ENCODE measurements at regions of chr16 and their contacts with region 1.

Region 1: DNA sequence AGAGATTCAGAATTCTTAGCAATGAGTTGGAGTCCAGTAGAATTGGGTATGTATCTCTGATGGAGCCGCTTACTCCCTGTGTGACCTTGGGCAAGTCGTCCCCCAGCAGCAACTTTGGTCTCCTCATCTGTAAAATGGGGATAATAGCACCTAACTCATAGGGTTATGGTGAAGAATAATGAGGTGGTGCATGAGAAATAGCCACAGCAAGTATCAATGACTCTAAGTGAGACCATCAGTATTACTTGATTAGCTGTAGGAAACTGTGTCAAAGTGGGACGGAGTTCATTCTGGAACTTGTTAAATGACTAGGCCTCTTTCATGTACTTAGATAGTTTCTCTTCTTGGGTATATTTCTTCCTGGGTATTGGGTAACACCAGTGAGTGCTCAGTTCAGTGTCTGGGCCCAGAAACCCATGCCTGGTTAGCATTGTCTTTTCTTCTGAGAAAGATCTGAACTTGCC is 6.4 kb downstream of the PRKCB start:
- DNase-seq: peak; percentile 71
- H3K4me3 Mint-ChIP-seq: peak overlapping the region; percentile 14
- H3K27ac Mint-ChIP-seq: peak overlapping the region; percentile 68
- H3K4me1 Mint-ChIP-seq: peaks cover 87% of the 10 kb centered on the region
- H3K27me3 Mint-ChIP-seq: no peaks in the 10 kb centered on the region

Region 2: GRCh38 chr16:23670137-23670776 is 171.9 kb before region 1 on chr16:
- CTCF ChIA-PET with region 1: no interaction called
- POLR2A ChIA-PET with region 1: no interaction called
- intact Hi-C with region 1: loop called (anchors 2 kb)
- DNase-seq: peak; percentile 84
- H3K4me3 Mint-ChIP-seq: no peak overlapping the region
- H3K27ac Mint-ChIP-seq: peak overlapping the region; percentile 44
- H3K4me1 Mint-ChIP-seq: peaks cover 19% of the 10 kb centered on the region
- H3K27me3 Mint-ChIP-seq: no peaks in the 10 kb centered on the region

Region 3: GRCh38 chr16:23795378-23795777 is 46.8 kb before region 1 on chr16:
- CTCF ChIA-PET with region 1: no interaction called
- POLR2A ChIA-PET with region 1: no interaction called
- intact Hi-C with region 1: no loop called
- DNase-seq: no peak
- H3K4me3 Mint-ChIP-seq: no peak overlapping the region
- H3K27ac Mint-ChIP-seq: no peak overlapping the region
- H3K4me1 Mint-ChIP-seq: no peaks in the 10 kb centered on the region
- H3K27me3 Mint-ChIP-seq: no peaks in the 10 kb centered on the region

Region 4: GRCh38 chr16:23852794-23853562 is 10.8 kb after region 1 on chr16:
- CTCF ChIA-PET with region 1: interaction called, 5 read pairs
- POLR2A ChIA-PET with region 1: no interaction called
- intact Hi-C with region 1: loop called (anchors 1 kb)
- DNase-seq: no peak
- H3K4me3 Mint-ChIP-seq: no peak overlapping the region
- H3K27ac Mint-ChIP-seq: no peak overlapping the region
- H3K4me1 Mint-ChIP-seq: peaks cover 87% of the 10 kb centered on the region
- H3K27me3 Mint-ChIP-seq: no peaks in the 10 kb centered on the region

Region 5: GRCh38 chr16:23962001-23962400 is 119.8 kb after region 1 on chr16:
- CTCF ChIA-PET with region 1: no interaction called
- POLR2A ChIA-PET with region 1: no interaction called
- intact Hi-C with region 1: loop called (anchors 2 kb)
- DNase-seq: peak; percentile 84
- H3K4me3 Mint-ChIP-seq: peak overlapping the region; percentile 34
- H3K27ac Mint-ChIP-seq: peak overlapping the region; percentile 47
- H3K4me1 Mint-ChIP-seq: peaks cover 67% of the 10 kb centered on the region
- H3K27me3 Mint-ChIP-seq: no peaks in the 10 kb centered on the region

Region 6: GRCh38 chr16:24151482-24151939 is 309.3 kb after region 1 on chr16:
- CTCF ChIA-PET with region 1: no interaction called
- POLR2A ChIA-PET with region 1: no interaction called
- intact Hi-C with region 1: loop called (anchors 5 kb)
- DNase-seq: peak; percentile 26
- H3K4me3 Mint-ChIP-seq: no peak overlapping the region
- H3K27ac Mint-ChIP-seq: peak overlapping the region; percentile 43
- H3K4me1 Mint-ChIP-seq: peaks cover 47% of the 10 kb centered on the region
- H3K27me3 Mint-ChIP-seq: no peaks in the 10 kb centered on the region

Region 7: DNA sequence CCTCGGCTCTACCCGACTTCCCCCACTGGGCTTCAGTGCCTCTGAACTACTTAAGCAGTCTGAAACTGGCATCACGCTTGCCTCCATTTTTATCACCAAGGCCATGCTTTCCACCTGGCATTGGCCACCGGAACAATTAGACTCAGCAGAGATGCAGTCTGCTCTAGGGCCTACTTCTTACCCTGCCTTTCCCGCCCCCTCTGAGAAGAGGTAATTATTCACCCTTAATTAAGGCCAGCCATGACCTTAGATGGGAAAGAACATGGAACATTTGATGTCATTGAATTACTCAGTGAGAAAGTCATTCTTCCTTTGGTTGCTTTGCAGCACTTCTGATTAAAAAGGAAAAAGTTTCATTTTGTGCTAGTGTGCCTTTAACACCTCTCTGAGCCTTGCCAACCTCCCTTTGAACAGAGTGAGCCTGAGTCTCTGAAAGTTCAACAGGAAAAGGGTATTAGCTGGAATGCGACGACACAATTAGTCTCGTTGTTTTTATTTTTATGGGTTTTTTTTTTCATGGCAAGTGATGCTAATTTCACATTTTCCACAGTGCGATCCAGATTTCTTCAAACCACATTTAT is 826.4 kb after region 1 on chr16:
- CTCF ChIA-PET with region 1: no interaction called
- POLR2A ChIA-PET with region 1: no interaction called
- intact Hi-C with region 1: loop called (anchors 10 kb)
- DNase-seq: peak; percentile 78
- H3K4me3 Mint-ChIP-seq: peak overlapping the region; percentile 64
- H3K27ac Mint-ChIP-seq: peak overlapping the region; percentile 90
- H3K4me1 Mint-ChIP-seq: peaks cover 51% of the 10 kb centered on the region
- H3K27me3 Mint-ChIP-seq: peaks cover 8% of the 10 kb centered on the region